ENCODE measurements at regions of chr19 and their contacts with region 1.

Region 1: GRCh38 chr19:58362272-58362994 is at the start of gene ZNF497:
- DNase-seq: peak; percentile 88 to 96
- H3K4me3 ChIP-seq: peak within 1 kb of the TSS; percentile 69
- H3K27ac ChIP-seq: peak within 1 kb of the TSS; percentile 89
- H3K4me1 ChIP-seq: no peaks in the 10 kb centered on the region
- H3K27me3 ChIP-seq: no peaks in the 10 kb centered on the region
- CTCF ChIP-seq: no peak
- total RNA-seq, gene ZNF497: 7.2 and 8.6 TPM in 2 replicates

Region 2: DNA sequence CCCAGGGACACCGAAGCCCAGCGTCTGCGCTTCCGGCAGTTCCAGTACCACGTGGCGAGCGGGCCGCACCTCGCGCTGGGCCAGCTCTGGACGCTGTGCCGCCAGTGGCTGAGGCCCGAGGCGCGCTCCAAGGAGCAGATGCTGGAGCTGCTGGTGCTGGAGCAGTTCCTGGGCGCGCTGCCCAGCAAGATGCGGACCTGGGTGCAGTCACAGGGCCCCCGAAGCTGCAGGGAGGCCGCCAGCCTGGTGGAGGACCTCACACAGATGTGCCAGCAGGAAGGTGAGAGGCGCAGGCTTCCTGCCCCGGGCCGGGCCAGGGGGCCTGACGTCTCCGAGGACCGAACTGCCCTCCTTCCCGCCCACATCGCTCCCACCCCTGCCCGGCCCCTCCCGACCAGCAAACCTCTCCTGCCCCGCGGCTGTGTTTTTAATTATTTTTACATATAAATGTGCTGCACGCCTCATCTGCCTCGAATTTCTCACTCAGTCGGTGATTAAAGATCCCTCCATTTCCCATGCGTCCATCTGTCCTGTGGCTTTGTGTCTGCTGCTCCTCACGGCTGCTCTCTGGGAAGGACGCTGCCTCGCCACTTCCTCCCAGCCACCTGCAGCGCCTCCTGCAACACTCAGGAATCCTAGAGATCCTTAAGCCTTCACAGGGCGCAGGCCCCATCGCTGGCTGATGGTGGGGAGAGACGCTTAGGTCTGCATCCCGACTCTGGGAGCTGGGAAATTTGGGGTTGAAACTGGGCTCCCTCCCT is 324.3 kb before region 1 on chr19:
- CTCF ChIA-PET with region 1: no interaction called
- POLR2A ChIA-PET with region 1: no interaction called
- intact Hi-C with region 1: no loop called
- DNase-seq: no peak
- H3K4me3 ChIP-seq: no peak overlapping the region
- H3K27ac ChIP-seq: no peak overlapping the region
- H3K4me1 ChIP-seq: no peaks in the 10 kb centered on the region
- H3K27me3 ChIP-seq: peaks cover 59% of the 10 kb centered on the region
- CTCF ChIP-seq: no peak

Region 3: DNA sequence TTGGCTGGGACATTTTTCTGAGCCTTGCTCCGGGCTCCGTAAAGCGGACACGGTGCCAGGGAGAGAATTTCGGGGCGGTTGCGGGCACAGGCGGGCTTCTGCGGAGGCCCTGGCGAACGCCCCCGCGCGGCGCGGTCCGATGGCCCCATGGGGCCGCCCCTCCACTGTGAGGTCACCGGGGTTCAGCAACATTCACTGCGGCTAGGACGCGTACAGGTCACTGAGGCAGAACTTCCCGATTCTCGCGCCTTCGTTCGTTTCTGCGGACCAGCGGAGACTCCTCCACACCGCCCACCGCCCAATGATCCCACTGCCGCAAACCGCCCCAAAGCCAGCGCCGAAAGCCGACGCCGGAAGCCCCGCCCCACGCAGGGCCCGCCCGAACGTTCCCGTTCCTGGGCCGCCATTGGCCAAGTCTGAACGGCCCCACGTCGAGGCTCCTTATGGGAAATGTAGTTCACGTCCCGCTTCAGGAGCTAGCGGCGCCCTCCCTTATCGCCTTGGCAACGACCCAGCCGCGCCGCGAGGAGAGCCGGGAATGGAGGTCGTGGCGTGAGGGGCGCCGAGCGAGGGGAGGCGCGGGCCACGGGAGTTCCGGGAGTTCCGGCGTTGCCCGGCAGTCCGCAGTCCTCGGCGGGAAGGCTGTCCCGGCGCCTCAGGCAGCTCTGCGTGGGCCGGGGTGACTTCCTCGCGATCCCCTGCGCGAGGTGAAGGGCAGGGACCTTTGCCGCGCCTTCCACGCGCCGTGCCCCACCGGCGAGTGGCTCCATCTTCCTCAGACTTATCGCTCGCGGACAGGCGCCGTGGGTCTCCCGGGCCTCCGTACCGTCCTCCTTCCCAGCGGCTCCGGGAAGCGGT is 45.9 kb after region 1 on chr19 and contains the start of gene ZNF584:
- CTCF ChIA-PET with region 1: no interaction called
- POLR2A ChIA-PET with region 1: interaction called, 3 read pairs
- intact Hi-C with region 1: loop called (anchors 5 kb)
- DNase-seq: peak; percentile 76 to 91
- H3K4me3 ChIP-seq: peak within 1 kb of the TSS; percentile 73
- H3K27ac ChIP-seq: peak within 1 kb of the TSS; percentile 9; the same call in 1 of the 2 replicates
- H3K4me1 ChIP-seq: peaks cover 12% of the 10 kb centered on the region
- H3K27me3 ChIP-seq: no peaks in the 10 kb centered on the region
- CTCF ChIP-seq: no peak
- total RNA-seq, gene ZNF584: 13.5 and 18.8 TPM in 2 replicates

Region 4: GRCh38 chr19:58416604-58417003 is 54.2 kb after region 1 on chr19:
- CTCF ChIA-PET with region 1: no interaction called
- POLR2A ChIA-PET with region 1: interaction called, 20 read pairs
- intact Hi-C with region 1: no loop called
- DNase-seq: no peak
- H3K4me3 ChIP-seq: no peak overlapping the region
- H3K27ac ChIP-seq: no peak overlapping the region
- H3K4me1 ChIP-seq: no peaks in the 10 kb centered on the region
- H3K27me3 ChIP-seq: no peaks in the 10 kb centered on the region
- CTCF ChIP-seq: no peak

Region 5: DNA sequence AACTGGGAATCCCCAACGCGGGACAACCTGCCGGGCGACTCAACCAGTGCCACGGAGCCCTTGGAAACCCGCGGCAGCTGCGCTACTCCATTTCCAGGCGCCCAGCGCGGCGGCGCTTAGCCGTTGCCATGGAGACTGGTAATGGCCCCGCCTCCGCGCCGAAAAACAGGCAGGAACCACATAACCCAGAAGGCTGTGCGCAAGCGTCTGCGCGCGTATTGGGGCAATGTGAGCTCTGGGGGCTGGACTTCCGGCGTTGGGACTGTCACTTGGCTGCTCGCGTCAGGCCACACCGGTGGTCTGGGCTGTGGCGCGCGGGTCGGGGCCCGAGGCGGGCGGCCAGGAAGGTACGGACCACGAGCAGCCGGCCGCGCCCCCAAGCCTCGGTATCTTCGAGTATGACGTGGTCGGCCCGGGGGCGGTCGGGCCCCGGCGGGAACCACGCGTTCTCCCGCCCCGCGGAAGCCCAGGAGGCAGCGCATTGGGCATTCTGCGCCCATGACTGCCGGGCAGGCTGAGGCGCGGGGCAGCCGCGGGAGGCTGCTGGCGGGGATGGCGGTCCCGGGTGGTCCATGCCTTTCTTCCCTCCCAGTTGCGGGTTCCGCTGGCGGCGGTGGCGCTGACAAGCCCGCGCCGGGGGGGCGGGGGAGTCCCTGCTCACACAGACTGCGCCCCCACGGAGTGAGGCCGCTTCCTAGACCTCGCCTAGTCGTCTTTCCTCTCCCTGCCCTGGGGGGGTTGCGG is 89.1 kb after region 1 on chr19 and contains the start of gene ZNF324B:
- CTCF ChIA-PET with region 1: no interaction called
- POLR2A ChIA-PET with region 1: no interaction called
- intact Hi-C with region 1: loop called (anchors 5 kb)
- DNase-seq: peak; percentile 86 to 93
- H3K4me3 ChIP-seq: peak within 1 kb of the TSS; percentile 81
- H3K27ac ChIP-seq: no peak within 1 kb of the TSS
- H3K4me1 ChIP-seq: 0 out of 2 replicates have a peak, but pooled peaks cover 5% of the 10 kb centered on the region
- H3K27me3 ChIP-seq: peaks cover 6% of the 10 kb centered on the region; the same call in 1 of the 2 replicates
- CTCF ChIP-seq: no peak
- total RNA-seq, gene ZNF324B: 4.3 and 6.1 TPM in 2 replicates

Region 6: DNA sequence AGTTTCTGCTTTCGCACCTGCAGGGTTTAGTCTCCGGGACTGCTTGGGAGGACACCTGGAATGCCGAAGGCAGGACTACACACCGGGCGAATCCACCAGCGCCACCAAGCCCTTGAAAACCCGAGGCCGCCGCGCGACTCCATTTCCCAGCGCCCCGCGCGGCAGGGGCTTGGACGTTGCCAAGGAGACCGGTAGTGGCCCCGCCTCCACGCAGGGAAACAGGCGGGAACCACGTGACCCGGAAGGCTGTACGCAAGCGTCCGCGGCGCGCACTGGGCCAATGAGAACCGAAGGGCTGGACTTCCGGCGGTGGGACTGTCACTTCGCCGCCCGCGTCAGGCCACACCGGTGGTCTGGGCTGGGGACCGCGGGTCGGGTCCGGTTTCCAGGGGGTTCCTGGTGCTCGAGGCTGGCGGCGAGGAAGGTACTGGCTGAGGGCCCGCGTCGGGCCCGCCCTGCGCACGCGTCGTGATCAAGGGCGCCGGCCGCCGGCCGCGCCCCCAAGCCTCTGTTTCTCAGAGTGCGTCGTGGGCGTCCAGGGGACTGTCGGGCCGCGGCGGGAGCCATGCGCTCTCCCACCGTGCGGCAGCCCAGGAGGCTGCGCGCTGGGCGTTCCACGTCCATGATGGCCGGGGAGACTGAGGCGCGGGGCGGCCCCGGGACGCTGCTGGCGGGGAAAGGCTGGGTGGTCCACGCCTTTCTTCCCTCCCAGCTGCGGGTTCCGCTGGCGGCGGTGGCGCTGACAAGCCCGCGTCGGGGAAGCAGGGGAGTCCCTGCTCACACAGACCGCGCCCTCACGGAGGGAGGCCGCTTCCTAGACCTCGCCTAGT is 104.5 kb after region 1 on chr19 and contains the start of gene ZNF324:
- CTCF ChIA-PET with region 1: no interaction called
- POLR2A ChIA-PET with region 1: interaction called, 3 read pairs
- intact Hi-C with region 1: loop called (anchors 5 kb)
- DNase-seq: peak; percentile 85 to 96
- H3K4me3 ChIP-seq: peak within 1 kb of the TSS; percentile 68
- H3K27ac ChIP-seq: no peak within 1 kb of the TSS
- H3K4me1 ChIP-seq: no peaks in the 10 kb centered on the region
- H3K27me3 ChIP-seq: no peaks in the 10 kb centered on the region
- CTCF ChIP-seq: no peak
- total RNA-seq, gene ZNF324: 5.9 and 8.1 TPM in 2 replicates

Measured in PC-9 (cell line).